Sigmoid colon (tissue), 7 donors: ENCODE measurements at regions of chr11 and their contacts with region 1.

Region 1: GRCh38 chr11:102495161-102496042 is 35.1 kb downstream of the MMP7 start:
- DNase-seq: no peak
- H3K4me3 ChIP-seq: no peak overlapping the region
- H3K27ac ChIP-seq: peak overlapping the region in 1 of 4 donors; percentile 42
- H3K4me1 ChIP-seq: peaks cover 0 to 20% (median 7%) of the 10 kb centered on the region in 4 donors
- H3K27me3 ChIP-seq: no peaks in the 10 kb centered on the region
- CTCF ChIP-seq: peak; percentile 50 to 78 (median 70)
- EP300 ChIP-seq: no peak
- POLR2A ChIP-seq: no peak

Region 2: GRCh38 chr11:102287964-102288724 is 207.3 kb before region 1 on chr11:
- intact Hi-C with region 1: loop called (anchors 5 kb)
- DNase-seq: no peak
- H3K4me3 ChIP-seq: peak overlapping the region in 3 of 4 donors; percentile 23 to 33 (median 28)
- H3K27ac ChIP-seq: no peak overlapping the region
- H3K4me1 ChIP-seq: peaks cover 0 to 16% (median 6%) of the 10 kb centered on the region in 4 donors
- H3K27me3 ChIP-seq: no peaks in the 10 kb centered on the region
- CTCF ChIP-seq: peak; percentile 61 to 80 (median 66)
- EP300 ChIP-seq: no peak
- POLR2A ChIP-seq: no peak

Region 3: DNA sequence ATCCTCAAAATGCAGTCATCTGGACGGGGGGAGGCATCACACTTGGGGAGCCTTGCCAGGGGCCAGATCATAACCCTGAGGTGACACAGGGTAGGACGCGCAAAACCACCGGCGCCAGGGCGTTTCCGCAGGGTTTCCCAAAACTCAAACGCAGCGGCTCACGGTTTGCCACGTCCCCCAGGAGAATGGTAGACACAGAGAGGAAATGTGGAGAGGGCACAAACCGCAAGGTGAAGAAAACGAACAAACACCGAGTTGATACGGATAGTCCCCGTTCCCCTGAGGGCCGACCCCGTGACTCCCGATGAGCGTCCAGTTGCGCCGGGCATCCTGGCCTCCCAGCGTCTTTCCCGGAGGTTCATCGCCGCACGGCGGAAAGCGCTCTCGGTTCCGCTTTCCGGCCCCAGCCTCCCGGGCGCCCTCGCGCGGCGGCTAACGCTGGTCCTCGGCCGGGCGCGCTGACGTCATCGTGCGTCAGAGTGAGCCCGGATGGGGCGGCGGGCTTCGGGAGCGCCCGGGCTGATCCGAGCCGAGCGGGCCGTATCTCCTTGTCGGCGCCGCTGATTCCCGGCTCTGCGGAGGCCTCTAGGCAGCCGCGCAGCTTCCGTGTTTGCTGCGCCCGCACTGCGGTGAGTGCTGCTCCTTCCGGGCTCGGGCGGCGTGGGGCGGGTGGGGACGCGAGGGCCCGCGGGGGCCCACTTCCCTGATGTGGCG is 148.5 kb before region 1 on chr11 and contains the start of gene BIRC2:
- intact Hi-C with region 1: loop called (anchors 2 kb)
- DNase-seq: peak; percentile 96
- H3K4me3 ChIP-seq: peak within 1 kb of the TSS; percentile 63 to 90 (median 83)
- H3K27ac ChIP-seq: peak within 1 kb of the TSS; percentile 92 to 99 (median 99)
- H3K4me1 ChIP-seq: peaks cover 0 to 38% (median 33%) of the 10 kb centered on the region in 4 donors
- H3K27me3 ChIP-seq: no peaks in the 10 kb centered on the region
- CTCF ChIP-seq: peak; percentile 61 to 86 (median 73)
- EP300 ChIP-seq: peak in 1 of 4 donors; percentile 10
- POLR2A ChIP-seq: peak; percentile 87 to 88
- total RNA-seq, gene BIRC2: 32.7 to 56.0 (median 53.2) TPM

Region 4: DNA sequence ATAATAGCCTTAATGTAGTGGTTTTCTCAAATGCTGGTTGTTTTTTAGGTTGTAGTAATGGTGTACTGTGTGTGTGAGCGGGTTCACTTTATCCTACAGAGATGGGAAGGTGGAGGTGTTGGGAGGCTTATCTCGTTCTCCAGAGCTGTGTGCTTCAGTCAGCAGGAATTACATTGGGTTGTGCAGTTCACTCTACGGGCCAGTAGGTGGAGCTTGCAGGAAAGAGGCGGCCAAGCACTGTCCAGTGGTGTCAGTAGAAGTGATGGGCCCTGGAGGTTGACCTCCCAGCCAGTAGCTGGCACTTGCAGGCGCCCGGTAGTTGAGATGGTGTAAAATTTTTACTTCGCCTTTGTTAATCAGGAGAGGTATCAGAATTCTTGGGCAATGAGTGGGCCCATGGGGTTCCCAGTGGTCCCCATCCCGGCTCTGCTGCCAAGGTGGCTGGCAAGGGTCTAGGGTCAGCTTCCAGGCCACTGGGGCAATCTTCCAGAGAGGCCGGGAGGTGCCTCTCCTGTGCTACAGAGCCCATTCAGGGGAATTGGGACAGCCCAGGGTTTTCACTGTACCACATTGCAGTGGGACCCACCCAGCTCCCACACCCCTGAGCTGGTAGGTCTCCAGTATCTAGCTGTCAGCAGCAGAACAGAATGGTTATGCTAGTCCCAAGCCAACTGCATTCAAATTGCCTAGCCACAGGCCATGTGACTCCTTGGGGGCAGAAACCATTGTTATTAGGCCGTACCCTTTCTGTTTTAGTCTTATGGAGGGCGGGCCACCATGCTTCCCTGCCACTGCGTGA is 104.5 kb before region 1 on chr11:
- intact Hi-C with region 1: loop called (anchors 1 kb)
- DNase-seq: peak; percentile 80
- H3K4me3 ChIP-seq: no peak overlapping the region
- H3K27ac ChIP-seq: peak overlapping the region in 1 of 4 donors; percentile 14
- H3K4me1 ChIP-seq: peaks cover 0 to 7% (median 3%) of the 10 kb centered on the region in 4 donors
- H3K27me3 ChIP-seq: no peaks in the 10 kb centered on the region
- CTCF ChIP-seq: peak; percentile 73 to 90 (median 78)
- EP300 ChIP-seq: no peak
- POLR2A ChIP-seq: no peak

Region 5: GRCh38 chr11:102451681-102452460 is 43.5 kb before region 1 on chr11:
- intact Hi-C with region 1: loop called (anchors 2 kb)
- DNase-seq: peak; percentile 83
- H3K4me3 ChIP-seq: peak overlapping the region; percentile 72 to 90 (median 87)
- H3K27ac ChIP-seq: peak overlapping the region; percentile 86 to 97 (median 90)
- H3K4me1 ChIP-seq: peaks cover 0 to 52% (median 39%) of the 10 kb centered on the region in 4 donors
- H3K27me3 ChIP-seq: no peaks in the 10 kb centered on the region
- CTCF ChIP-seq: no peak
- EP300 ChIP-seq: no peak
- POLR2A ChIP-seq: no peak

Region 6: DNA sequence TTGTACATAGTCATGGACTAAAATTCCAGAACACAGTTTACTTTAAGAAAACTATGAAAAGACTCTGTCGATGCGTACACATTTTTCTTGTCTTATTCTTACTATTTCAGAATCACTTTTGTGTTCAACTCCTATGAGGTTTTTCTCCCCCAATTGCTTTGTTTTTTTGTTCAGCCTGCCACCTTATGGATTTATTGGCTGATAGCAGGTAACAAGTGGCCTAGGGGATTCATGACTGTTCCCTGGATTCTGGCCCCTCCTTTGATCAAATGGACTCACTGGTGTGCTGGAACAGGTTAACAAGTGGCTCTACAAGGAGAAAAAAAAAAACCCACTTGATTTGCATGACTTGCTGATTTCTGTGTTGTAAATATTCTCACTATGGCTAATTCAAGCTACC is 119.1 kb after region 1 on chr11:
- intact Hi-C with region 1: loop called (anchors 5 kb)
- DNase-seq: no peak
- H3K4me3 ChIP-seq: no peak overlapping the region
- H3K27ac ChIP-seq: no peak overlapping the region
- H3K4me1 ChIP-seq: peaks cover 0 to 6% (median 0%) of the 10 kb centered on the region in 4 donors
- H3K27me3 ChIP-seq: no peaks in the 10 kb centered on the region
- CTCF ChIP-seq: no peak
- EP300 ChIP-seq: no peak
- POLR2A ChIP-seq: no peak

Region 7: GRCh38 chr11:102666331-102666957 is 171.0 kb after region 1 on chr11:
- intact Hi-C with region 1: loop called (anchors 5 kb)
- DNase-seq: no peak
- H3K4me3 ChIP-seq: no peak overlapping the region
- H3K27ac ChIP-seq: no peak overlapping the region
- H3K4me1 ChIP-seq: peaks cover 0 to 7% (median 3%) of the 10 kb centered on the region in 4 donors
- H3K27me3 ChIP-seq: no peaks in the 10 kb centered on the region
- CTCF ChIP-seq: peak; percentile 60 to 77 (median 70)
- EP300 ChIP-seq: no peak
- POLR2A ChIP-seq: no peak